ENCODE measurements at regions of chr2 and their contacts with region 1.

Region 1: GRCh38 chr2:219182331-219183150 is 4.5 kb downstream of the RETREG2 start:
- DNase-seq: no peak
- ATAC-seq: no peak
- H3K4me3 ChIP-seq: no peak overlapping the region
- H3K27ac ChIP-seq: no peak overlapping the region
- H3K4me1 ChIP-seq: peaks cover 10% of the 10 kb centered on the region
- H3K27me3 ChIP-seq: no peaks in the 10 kb centered on the region
- CTCF ChIP-seq: no peak

Region 2: GRCh38 chr2:218944759-218945404 is 237.7 kb before region 1 on chr2:
- CTCF ChIA-PET with region 1: no interaction called
- POLR2A ChIA-PET with region 1: interaction called, 17 read pairs
- in situ Hi-C with region 1: no loop called
- intact Hi-C with region 1: no loop called
- DNase-seq: no peak
- ATAC-seq: no peak
- H3K4me3 ChIP-seq: no peak overlapping the region
- H3K27ac ChIP-seq: no peak overlapping the region
- H3K4me1 ChIP-seq: no peaks in the 10 kb centered on the region
- H3K27me3 ChIP-seq: no peaks in the 10 kb centered on the region; the same call in 1 of the 2 replicates
- CTCF ChIP-seq: no peak

Measured in Panc1 (cell line).